ENCODE measurements at regions of chr17 and their contacts with region 1.

Region 1: DNA sequence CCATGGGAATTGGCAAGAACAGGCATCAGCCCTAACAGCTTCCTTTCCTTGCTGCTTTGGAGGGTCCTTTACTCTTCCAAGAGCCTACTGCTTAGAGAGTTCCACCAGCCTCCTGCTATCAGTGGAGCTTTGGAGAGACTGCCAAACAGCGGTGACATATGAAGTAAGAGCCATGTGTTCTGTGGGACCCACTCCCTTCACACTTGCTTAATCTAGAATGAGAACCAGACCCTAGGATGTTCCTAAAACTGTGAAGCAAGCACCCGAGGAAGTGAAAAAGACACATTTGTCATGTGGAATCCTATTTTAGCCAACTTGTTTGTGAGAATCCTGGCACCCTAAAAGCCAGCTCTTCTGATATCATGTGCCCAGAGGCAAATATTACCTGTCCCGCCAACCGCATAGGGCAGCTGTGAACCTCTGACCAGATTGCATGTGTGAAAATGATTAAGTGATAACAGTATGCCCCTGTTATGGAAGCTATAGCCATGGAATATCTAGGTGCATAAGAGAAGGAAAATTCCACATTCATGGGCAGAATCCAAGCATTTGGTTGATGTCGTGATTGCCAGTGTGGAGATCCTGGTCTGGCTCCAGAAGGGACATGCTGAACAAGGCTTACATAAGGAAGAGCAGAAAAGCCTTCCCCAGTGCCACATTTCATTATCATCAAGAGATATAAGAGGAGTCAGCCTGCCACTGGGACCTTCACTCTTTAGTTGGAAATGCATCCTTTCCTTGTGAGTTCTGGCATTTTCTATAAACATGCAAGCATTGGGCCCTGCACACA is 18.7 kb downstream of the RCVRN start:
- DNase-seq: no peak
- ATAC-seq: peak in 1 of 2 donors; percentile 54

Region 2: DNA sequence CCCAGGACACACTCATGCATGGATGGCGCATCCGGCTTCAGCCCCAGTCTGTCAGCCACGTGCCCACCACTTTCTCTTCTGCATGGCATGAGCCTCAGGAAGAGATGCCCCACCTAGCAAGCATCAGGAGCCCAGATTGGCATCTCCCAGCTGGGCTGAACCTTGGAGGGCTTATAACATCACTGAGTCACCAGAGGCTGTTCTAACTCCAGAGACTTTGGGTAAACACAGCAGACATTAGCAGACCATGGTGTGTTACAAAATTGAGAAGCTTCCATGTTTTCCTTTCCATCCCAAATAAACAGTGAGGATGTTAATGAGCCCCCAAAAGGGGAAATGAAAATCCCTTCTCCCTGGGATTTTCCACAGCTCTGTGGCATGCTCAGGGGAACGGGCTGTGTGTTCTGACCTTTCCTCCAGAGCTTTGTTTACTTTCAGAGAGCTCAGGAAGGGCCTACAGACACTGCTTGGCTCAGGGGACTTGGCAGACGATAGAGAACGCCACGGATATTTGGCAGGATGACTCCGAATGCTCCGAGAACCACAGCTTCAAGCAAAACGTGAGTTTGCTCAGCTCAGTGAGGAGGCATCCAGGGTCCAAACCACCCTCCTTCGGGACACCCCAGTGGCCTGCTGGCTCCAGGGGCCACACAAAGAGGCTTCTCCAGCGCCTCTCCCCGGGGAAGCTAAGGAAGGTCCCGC is 44.1 kb before region 1 on chr17:
- intact Hi-C with region 1: loop called in 1 of 2 experiments (anchors 5 kb)
- DNase-seq: peak; percentile 66
- ATAC-seq: peak; percentile 75 to 78